ENCODE measurements at regions of chr17 and their contacts with region 1.

Region 1: GRCh38 chr17:68205251-68205807 is 42.5 kb upstream of the AMZ2 start:
- DNase-seq: peak; percentile 98

Region 2: GRCh38 chr17:68089887-68090286 is 115.4 kb before region 1 on chr17:
- intact Hi-C with region 1: no loop called
- DNase-seq: no peak

Region 3: DNA sequence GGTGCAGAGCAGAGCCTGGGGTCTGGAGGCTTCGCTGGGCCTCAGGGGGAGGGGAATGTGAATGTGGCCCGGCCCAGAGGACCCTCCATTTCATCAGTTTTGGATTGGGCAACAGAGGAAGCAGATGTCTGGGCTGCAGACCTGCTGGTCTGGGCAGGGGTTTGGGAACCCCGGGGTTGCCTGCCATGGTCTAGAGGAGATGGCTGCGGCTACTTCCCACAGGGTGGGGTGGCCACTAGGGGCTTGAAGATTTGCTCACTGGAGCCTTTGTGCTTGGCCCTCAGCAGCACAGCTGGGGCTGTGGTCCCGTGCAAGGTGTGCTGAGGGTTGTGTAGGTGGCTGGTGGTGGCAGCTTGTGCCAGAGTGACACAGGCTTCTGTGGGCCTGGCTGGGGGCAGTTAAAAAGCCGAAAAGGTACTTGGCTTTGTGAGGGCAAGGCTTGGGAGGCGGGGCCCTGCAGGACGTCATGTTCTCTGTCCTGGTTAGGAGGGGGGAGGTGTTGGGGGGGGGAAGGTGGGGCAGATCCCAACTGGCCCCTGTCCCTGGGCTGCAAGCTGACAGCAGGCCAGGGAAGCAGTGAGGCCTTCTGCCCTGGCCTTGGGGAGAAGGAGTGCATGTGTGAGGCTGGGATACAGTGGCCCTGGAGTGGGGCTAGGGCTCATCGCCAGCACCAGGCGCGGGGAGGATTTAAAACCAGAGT is 71.8 kb before region 1 on chr17:
- intact Hi-C with region 1: no loop called
- DNase-seq: no peak

Region 4: GRCh38 chr17:68247445-68248198 is 42.3 kb after region 1 on chr17 and contains the start of gene AMZ2:
- intact Hi-C with region 1: loop called (anchors 5 kb)
- DNase-seq: peak; percentile 98
- total RNA-seq, gene AMZ2: 97.4 TPM